Caco-2 (cell line): ENCODE measurements at regions of chr3 and their contacts with region 1.

Region 1: DNA sequence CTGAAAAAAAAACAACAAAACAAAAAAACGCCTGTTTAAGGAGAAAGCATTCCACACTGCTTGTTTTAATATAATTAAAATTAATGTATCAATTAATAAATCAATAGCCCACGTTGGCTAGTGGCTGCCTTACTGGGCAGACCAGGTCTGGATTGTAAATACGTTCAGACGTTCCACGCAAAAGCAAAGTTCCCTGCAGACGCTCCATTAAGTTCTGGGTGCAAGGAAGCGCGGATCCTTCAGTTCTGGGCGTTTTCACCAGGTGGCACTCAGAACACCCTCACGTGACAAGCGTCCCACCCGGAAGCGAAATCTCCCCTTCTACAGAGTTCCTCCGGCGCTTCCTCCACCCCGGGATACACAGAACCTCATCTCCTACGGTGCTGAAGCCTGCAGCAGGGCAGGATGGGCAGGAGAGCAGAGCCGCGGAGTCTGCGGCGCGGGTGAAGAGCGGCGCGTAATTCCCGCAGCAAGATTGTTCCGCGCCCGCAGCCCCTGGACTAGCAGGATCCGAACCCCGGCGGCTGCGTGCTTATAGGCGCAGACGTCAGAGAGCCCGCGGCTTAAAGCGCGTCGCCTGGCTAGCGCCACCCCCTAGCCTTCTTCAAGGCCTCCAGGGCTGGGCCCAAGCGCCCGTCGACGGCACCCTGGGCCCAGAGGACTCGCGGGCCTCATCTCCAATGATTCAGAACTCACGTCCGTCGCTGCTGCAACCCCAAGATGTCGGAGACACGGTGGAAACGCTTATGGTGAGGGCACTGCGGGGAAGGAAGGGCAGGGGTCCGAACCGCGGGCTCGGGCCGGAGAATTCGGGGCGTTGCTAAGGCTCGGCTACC is at the start of gene SLC25A38:
- DNase-seq: peak; percentile 82 to 87
- H3K4me3 ChIP-seq: peak within 1 kb of the TSS; percentile 75
- H3K4me3 Mint-ChIP-seq: peak within 1 kb of the TSS; percentile 96
- H3K27ac Mint-ChIP-seq: peak within 1 kb of the TSS; percentile 99
- H3K4me1 ChIP-seq: peaks cover 38% of the 10 kb centered on the region
- H3K4me1 Mint-ChIP-seq: peaks cover 27% of the 10 kb centered on the region
- H3K27me3 ChIP-seq: no peaks in the 10 kb centered on the region
- H3K27me3 Mint-ChIP-seq: no peaks in the 10 kb centered on the region
- CTCF ChIP-seq: peak in 1 of 2 experiments; percentile 49
- total RNA-seq, gene SLC25A38: 33.1 and 37.7 TPM in 2 replicates

Region 2: DNA sequence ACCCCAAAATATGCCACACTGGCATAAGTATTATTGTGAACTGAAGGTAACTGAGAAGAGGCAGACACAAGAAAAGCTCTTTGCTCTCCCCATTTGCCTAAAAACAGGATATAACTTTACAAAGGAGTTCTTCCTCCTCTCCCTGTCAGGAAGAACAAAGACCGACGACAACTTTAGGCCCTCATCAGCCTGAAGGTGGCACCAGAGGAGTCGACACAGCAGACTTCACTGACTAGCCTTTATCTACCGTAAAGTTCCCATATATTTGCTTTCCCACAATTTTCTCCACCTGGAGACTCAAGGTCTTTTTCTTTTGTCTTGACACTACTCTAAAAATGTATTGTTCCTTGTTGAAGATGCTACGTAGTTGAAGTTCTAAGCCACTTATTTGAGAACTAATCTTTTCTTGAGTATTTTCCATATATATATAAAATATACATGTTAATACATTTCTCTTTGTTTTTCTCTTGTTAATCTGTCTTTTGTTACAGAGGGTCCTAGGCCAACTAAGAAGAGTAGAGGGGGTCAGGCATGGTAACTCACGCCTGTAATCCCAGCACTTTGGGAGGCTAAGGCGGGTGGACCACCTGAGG is 174.7 kb before region 1 on chr3:
- CTCF ChIA-PET with region 1: no interaction called
- POLR2A ChIA-PET with region 1: no interaction called
- intact Hi-C with region 1: loop called (anchors 5 kb)
- DNase-seq: peak; percentile 52 to 54
- H3K4me3 ChIP-seq: no peak overlapping the region
- H3K4me3 Mint-ChIP-seq: no peak overlapping the region
- H3K27ac Mint-ChIP-seq: no peak overlapping the region
- H3K4me1 ChIP-seq: 0 out of 2 replicates have a peak, but pooled peaks cover 3% of the 10 kb centered on the region
- H3K4me1 Mint-ChIP-seq: peaks cover 6% of the 10 kb centered on the region
- H3K27me3 ChIP-seq: no peaks in the 10 kb centered on the region; the same call in 1 of the 2 replicates
- H3K27me3 Mint-ChIP-seq: peaks cover 3% of the 10 kb centered on the region
- CTCF ChIP-seq: peak; percentile 43 to 59

Region 3: DNA sequence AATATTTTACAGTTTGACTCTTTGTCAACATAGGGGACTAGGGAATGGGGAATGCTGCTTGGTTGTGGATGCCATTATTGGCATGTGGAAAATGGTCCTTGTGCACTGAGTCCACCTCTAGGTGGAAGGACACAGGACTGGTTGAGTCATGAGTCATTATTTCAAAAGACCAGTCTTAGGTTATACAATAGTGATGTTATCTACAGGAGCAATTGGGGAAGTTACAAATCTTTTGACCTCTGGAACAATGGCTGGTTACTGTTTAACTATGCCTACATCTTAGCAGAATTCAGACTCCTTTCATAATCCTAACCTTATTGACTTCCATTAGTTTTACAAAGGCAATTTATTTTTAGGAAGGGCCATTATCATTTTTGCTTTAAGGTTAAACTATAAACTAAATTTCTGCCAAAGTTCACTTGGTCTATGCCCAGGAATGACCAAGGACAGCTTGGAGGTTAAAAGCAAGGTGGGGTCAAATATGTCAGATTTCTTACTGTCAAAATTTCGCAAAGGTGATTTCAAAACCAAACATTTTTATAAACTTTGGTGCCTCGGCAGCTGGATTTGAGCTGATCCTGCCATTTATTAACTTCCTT is 65.6 kb before region 1 on chr3:
- CTCF ChIA-PET with region 1: no interaction called
- POLR2A ChIA-PET with region 1: no interaction called
- intact Hi-C with region 1: loop called (anchors 5 kb)
- DNase-seq: peak; percentile 74
- H3K4me3 ChIP-seq: no peak overlapping the region
- H3K4me3 Mint-ChIP-seq: peak overlapping the region; percentile 23
- H3K27ac Mint-ChIP-seq: peak overlapping the region; percentile 83
- H3K4me1 ChIP-seq: peaks cover 17% of the 10 kb centered on the region
- H3K4me1 Mint-ChIP-seq: no peaks in the 10 kb centered on the region
- H3K27me3 ChIP-seq: no peaks in the 10 kb centered on the region
- H3K27me3 Mint-ChIP-seq: no peaks in the 10 kb centered on the region
- CTCF ChIP-seq: no peak

Region 4: GRCh38 chr3:39406368-39407258 is 23.4 kb after region 1 on chr3 and contains the start of gene RPSA:
- CTCF ChIA-PET with region 1: no interaction called
- POLR2A ChIA-PET with region 1: no interaction called
- intact Hi-C with region 1: loop called (anchors 1 kb)
- DNase-seq: peak; percentile 97
- H3K4me3 ChIP-seq: peak within 1 kb of the TSS; percentile 76
- H3K4me3 Mint-ChIP-seq: peak within 1 kb of the TSS; percentile 88
- H3K27ac Mint-ChIP-seq: peak within 1 kb of the TSS; percentile 98
- H3K4me1 ChIP-seq: peaks cover 7% of the 10 kb centered on the region
- H3K4me1 Mint-ChIP-seq: peaks cover 9% of the 10 kb centered on the region
- H3K27me3 ChIP-seq: no peaks in the 10 kb centered on the region
- H3K27me3 Mint-ChIP-seq: no peaks in the 10 kb centered on the region
- CTCF ChIP-seq: peak in 1 of 2 experiments; percentile 53
- total RNA-seq, gene RPSA: 1,548 and 1,562 TPM in 2 replicates